ENCODE measurements at regions of chr7 and their contacts with region 1.

Region 1: DNA sequence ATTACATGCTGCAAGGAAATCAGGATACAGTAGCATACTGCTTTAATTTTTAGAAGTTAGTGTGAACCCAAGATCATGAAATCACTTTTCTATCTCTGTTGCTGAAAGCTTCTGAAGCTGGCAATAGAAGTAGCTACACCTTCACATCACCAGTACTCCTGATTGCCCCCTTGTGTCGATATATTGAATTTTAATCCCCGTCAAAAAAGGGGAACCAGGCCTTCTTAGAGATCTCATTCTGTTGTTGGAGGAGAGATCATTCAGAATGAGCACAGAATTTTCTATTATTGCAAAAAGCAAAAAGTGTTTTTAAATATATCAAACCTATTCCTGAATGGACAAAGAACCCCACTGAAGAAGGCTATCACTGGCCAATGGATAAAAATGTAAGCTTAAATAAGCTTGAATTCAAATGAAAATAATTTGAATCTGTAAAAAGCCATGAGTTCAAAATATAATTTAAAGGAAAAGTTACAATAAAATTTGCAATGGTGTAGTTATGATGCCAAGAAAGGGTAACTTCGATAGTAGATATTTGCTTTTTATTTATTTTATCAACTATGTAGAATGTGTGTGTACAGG is 39.7 kb upstream of the TEX47 start:
- DNase-seq: no peak
- ATAC-seq: no peak
- H3K4me3 Mint-ChIP-seq: no peak overlapping the region
- H3K27ac Mint-ChIP-seq: no peak overlapping the region
- H3K4me1 Mint-ChIP-seq: no peaks in the 10 kb centered on the region
- H3K27me3 Mint-ChIP-seq: no peaks in the 10 kb centered on the region

Region 2: GRCh38 chr7:88546808-88547207 is 288.4 kb before region 1 on chr7:
- CTCF ChIA-PET with region 1: interaction called, 3 read pairs
- POLR2A ChIA-PET with region 1: no interaction called
- intact Hi-C with region 1: loop called in 1 of 2 experiments (anchors 10 kb)
- DNase-seq: peak; percentile 45
- ATAC-seq: no peak
- H3K4me3 Mint-ChIP-seq: no peak overlapping the region
- H3K27ac Mint-ChIP-seq: no peak overlapping the region
- H3K4me1 Mint-ChIP-seq: no peaks in the 10 kb centered on the region
- H3K27me3 Mint-ChIP-seq: no peaks in the 10 kb centered on the region